Activated CD4-positive, alpha-beta memory T cell treated with anti-CD3 and anti-CD28 coated beads, Interleukin-2, amount 10 ng/mL, durations not matched to agents 7 days and 5 days (primary cell): ENCODE measurements at regions of chr11 and their contacts with region 1.

Region 1: DNA sequence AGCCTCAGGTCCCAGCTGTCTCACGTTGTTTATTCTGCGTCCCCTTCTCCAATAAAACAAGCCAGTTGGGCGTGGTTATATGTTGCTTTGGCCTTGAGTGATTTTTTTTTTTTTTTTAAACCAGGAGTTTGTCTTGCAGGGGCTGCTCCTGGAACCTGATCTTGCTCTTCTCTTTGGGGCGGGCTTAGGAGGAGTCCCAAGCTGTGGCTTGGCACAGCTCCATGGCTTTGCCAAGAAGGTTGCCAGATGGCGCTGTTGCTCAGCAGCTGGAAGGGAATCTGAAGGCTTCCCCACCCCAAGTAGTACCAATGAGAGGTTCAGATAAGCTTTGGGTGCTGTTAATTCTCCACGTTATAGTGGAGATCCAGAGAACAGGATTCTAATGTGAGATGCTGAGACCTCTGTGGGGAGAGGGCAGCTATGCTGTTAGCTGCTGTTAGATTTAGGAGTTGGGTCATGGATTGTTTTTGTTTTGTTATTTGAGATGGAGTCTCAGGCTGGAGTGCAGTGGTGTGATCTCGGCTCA is 2.0 kb upstream of the FERMT3 start:
- DNase-seq: peak; percentile 84
- H3K4me3 Mint-ChIP-seq: peak overlapping the region; percentile 48
- H3K27ac Mint-ChIP-seq: peak overlapping the region; percentile 81
- H3K4me1 Mint-ChIP-seq: peaks cover 52% of the 10 kb centered on the region
- H3K27me3 Mint-ChIP-seq: no peaks in the 10 kb centered on the region

Region 2: DNA sequence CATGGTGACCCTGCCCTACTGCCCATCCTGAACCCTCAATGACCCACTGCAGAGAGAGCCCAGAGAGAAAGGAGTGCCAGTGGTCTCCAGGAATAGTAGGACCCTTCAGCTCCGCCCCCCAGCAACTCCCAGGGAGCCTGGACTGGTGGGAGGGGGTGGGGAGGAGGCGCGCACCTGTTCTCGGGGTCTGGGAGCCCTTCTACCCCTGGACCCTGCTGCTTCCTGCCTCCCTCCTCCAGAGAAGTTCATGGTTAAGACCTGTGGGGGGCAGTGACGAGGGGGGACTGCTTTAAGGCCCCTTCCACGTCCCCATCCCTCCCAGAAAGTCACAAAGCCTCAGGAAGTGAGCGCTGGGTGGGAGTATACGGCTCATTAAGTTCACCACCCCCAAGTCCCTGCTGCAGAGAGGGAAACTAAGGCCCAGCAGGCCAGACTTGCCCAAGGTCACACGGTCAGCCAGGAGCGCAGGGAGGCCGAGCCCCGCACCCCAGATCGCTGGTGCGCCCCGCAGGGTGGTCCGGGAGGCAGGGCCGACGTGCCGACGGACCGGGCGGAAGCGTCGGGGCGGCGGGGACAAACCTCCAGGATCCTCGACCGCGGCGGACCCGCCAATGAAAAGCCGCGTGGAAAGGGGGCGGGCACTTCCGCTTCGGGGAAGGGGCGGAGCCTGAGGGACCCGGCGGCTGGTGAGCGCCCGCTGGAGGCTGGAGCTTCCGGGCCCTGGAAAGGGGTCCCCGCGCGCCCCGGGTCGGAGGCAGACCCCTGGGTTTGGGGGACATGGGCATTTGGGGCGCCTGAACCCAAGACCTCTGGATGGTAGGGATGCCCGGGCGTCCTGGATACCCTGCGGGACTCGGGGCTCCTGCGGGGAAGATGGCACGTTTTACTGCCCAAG is 21.3 kb after region 1 on chr11 and contains the starts of genes NUDT22 and TRPT1:
- CTCF ChIA-PET with region 1: interaction called, 40 read pairs
- POLR2A ChIA-PET with region 1: interaction called, 275 read pairs
- DNase-seq: peak; percentile 94
- H3K4me3 Mint-ChIP-seq: peak within 1 kb of the TSS; percentile 88
- H3K27ac Mint-ChIP-seq: peak within 1 kb of the TSS; percentile 79
- H3K4me1 Mint-ChIP-seq: peaks cover 40% of the 10 kb centered on the region
- H3K27me3 Mint-ChIP-seq: no peaks in the 10 kb centered on the region
- total RNA-seq, gene NUDT22: 84.8 to 90.6 TPM
- total RNA-seq, gene TRPT1: 34.7 to 35.3 TPM

Region 3: GRCh38 chr11:64240394-64241174 is 36.1 kb after region 1 on chr11 and contains the start of gene FKBP2:
- CTCF ChIA-PET with region 1: interaction called, 14 read pairs
- POLR2A ChIA-PET with region 1: interaction called, 107 read pairs
- DNase-seq: peak; percentile 98
- H3K4me3 Mint-ChIP-seq: peak within 1 kb of the TSS; percentile 90
- H3K27ac Mint-ChIP-seq: peak within 1 kb of the TSS; percentile 92
- H3K4me1 Mint-ChIP-seq: peaks cover 52% of the 10 kb centered on the region
- H3K27me3 Mint-ChIP-seq: no peaks in the 10 kb centered on the region
- total RNA-seq, gene FKBP2: 26.4 to 27.9 TPM

Region 4: GRCh38 chr11:64269380-64270234 is 65.1 kb after region 1 on chr11:
- CTCF ChIA-PET with region 1: interaction called, 14 read pairs
- POLR2A ChIA-PET with region 1: interaction called, 87 read pairs
- DNase-seq: peak; percentile 98
- H3K4me3 Mint-ChIP-seq: peak overlapping the region; percentile 85
- H3K27ac Mint-ChIP-seq: peak overlapping the region; percentile 89
- H3K4me1 Mint-ChIP-seq: peaks cover 30% of the 10 kb centered on the region
- H3K27me3 Mint-ChIP-seq: no peaks in the 10 kb centered on the region

Region 5: DNA sequence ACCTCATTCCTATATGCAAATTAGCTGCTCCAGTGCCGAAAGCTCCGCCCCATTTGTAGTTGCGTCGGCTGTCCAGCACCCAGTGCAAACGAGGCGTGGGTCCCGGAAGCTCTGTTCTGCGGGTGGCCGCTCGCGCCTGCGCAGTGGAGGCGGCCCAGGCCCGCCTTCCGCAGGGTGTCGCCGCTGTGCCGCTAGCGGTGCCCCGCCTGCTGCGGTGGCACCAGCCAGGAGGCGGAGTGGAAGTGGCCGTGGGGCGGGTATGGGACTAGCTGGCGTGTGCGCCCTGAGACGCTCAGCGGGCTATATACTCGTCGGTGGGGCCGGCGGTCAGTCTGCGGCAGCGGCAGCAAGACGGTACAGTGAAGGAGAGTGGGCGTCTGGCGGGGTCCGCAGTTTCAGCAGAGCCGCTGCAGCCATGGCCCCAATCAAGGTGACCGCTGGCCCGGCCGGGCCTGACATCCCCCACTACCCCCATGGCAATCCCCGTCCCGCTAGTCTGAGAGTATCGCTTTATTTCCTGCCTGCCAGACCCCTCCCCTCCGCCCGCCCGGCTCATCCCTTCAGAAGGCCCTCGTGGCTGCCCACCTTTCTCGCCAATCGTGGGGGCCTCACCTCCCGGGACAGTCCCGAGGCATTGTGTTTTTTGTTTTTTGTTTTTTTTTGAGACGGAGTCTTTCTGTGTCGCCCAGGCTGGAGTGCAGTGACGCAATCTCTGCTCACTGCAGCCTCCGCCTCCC is 113.6 kb after region 1 on chr11 and contains the start of gene PRDX5:
- CTCF ChIA-PET with region 1: interaction called, 9 read pairs
- POLR2A ChIA-PET with region 1: interaction called, 35 read pairs
- DNase-seq: peak; percentile 96
- H3K4me3 Mint-ChIP-seq: peak within 1 kb of the TSS; percentile 91
- H3K27ac Mint-ChIP-seq: peak within 1 kb of the TSS; percentile 96
- H3K4me1 Mint-ChIP-seq: peaks cover 53% of the 10 kb centered on the region
- H3K27me3 Mint-ChIP-seq: no peaks in the 10 kb centered on the region
- total RNA-seq, gene PRDX5: 137 to 139 TPM